CD14-positive monocyte (primary cell): ENCODE measurements at regions of chr6 and their contacts with region 1.

Region 1: GRCh38 chr6:35688581-35689322 is at the start of gene FKBP5:
- DNase-seq: peak; percentile 87 to 92 (median 89)
- H3K4me3 ChIP-seq: peak within 1 kb of the TSS; percentile 83 to 98 (median 98)
- H3K4me3 Mint-ChIP-seq: peak within 1 kb of the TSS; percentile 96 to 97
- H3K27ac ChIP-seq: peak within 1 kb of the TSS; percentile 51 to 80
- H3K27ac Mint-ChIP-seq: peak within 1 kb of the TSS; percentile 87 to 96 (median 94)
- H3K4me1 ChIP-seq: peaks cover 37 to 58% of the 10 kb centered on the region in 2 donors
- H3K4me1 Mint-ChIP-seq: peaks cover 34% of the 10 kb centered on the region
- H3K27me3 ChIP-seq: no peaks in the 10 kb centered on the region
- H3K27me3 Mint-ChIP-seq: peaks cover 0 to 2% (median 1%) of the 10 kb centered on the region in 3 donors
- CTCF ChIP-seq: no peak
- polyA plus RNA-seq, gene FKBP5: 20.2 to 58.5 (median 56.9) TPM

Region 2: GRCh38 chr6:35624341-35625070 is 64.2 kb before region 1 on chr6:
- intact Hi-C with region 1: no loop called
- DNase-seq: no peak
- H3K4me3 ChIP-seq: no peak overlapping the region
- H3K4me3 Mint-ChIP-seq: no peak overlapping the region
- H3K27ac ChIP-seq: peak overlapping the region in 1 of 2 donors; percentile 73
- H3K27ac Mint-ChIP-seq: peak overlapping the region in 4 of 7 donors; percentile 1 to 46 (median 34)
- H3K4me1 ChIP-seq: peaks cover 24 to 29% of the 10 kb centered on the region in 2 donors
- H3K4me1 Mint-ChIP-seq: peaks cover 49% of the 10 kb centered on the region
- H3K27me3 ChIP-seq: no peaks in the 10 kb centered on the region
- H3K27me3 Mint-ChIP-seq: no peaks in the 10 kb centered on the region
- CTCF ChIP-seq: peak; percentile 41

Region 3: GRCh38 chr6:35669451-35670045 is 19.2 kb before region 1 on chr6:
- intact Hi-C with region 1: loop called in 1 of 2 experiments (anchors 2 kb)
- DNase-seq: peak in 2 of 3 donors; percentile 17 to 35
- H3K4me3 ChIP-seq: peak overlapping the region; percentile 12 to 59 (median 34)
- H3K4me3 Mint-ChIP-seq: peak overlapping the region in 1 of 2 donors; percentile 75
- H3K27ac ChIP-seq: peak overlapping the region in 1 of 2 donors; percentile 75
- H3K27ac Mint-ChIP-seq: peak overlapping the region; percentile 64 to 90 (median 73)
- H3K4me1 ChIP-seq: peaks cover 30 to 45% of the 10 kb centered on the region in 2 donors
- H3K4me1 Mint-ChIP-seq: peaks cover 40% of the 10 kb centered on the region
- H3K27me3 ChIP-seq: no peaks in the 10 kb centered on the region
- H3K27me3 Mint-ChIP-seq: peaks cover 0 to 1% (median 0%) of the 10 kb centered on the region in 3 donors
- CTCF ChIP-seq: no peak

Region 4: GRCh38 chr6:35731736-35732532 is 43.2 kb after region 1 on chr6:
- intact Hi-C with region 1: loop called (anchors 2 to 5 kb)
- DNase-seq: peak; percentile 55 to 59 (median 57)
- H3K4me3 ChIP-seq: peak overlapping the region; percentile 76 to 95 (median 76)
- H3K4me3 Mint-ChIP-seq: peak overlapping the region; percentile 83 to 92
- H3K27ac ChIP-seq: peak overlapping the region; percentile 91 to 92
- H3K27ac Mint-ChIP-seq: peak overlapping the region; percentile 86 to 95 (median 93)
- H3K4me1 ChIP-seq: peaks cover 53 to 71% of the 10 kb centered on the region in 2 donors
- H3K4me1 Mint-ChIP-seq: peaks cover 58% of the 10 kb centered on the region
- H3K27me3 ChIP-seq: no peaks in the 10 kb centered on the region
- H3K27me3 Mint-ChIP-seq: peaks cover 0 to 2% (median 0%) of the 10 kb centered on the region in 3 donors
- CTCF ChIP-seq: no peak